ENCODE measurements at regions of chr6 and their contacts with region 1.

Region 1: GRCh38 chr6:10441004-10441662 is 26.3 kb upstream of the TFAP2A start:
- DNase-seq: peak; percentile 98
- H3K4me3 Mint-ChIP-seq: peak overlapping the region; percentile 40
- H3K27ac Mint-ChIP-seq: peak overlapping the region; percentile 98
- H3K4me1 Mint-ChIP-seq: peaks cover 15% of the 10 kb centered on the region
- H3K27me3 Mint-ChIP-seq: no peaks in the 10 kb centered on the region
- CTCF ChIP-seq: no peak

Region 2: DNA sequence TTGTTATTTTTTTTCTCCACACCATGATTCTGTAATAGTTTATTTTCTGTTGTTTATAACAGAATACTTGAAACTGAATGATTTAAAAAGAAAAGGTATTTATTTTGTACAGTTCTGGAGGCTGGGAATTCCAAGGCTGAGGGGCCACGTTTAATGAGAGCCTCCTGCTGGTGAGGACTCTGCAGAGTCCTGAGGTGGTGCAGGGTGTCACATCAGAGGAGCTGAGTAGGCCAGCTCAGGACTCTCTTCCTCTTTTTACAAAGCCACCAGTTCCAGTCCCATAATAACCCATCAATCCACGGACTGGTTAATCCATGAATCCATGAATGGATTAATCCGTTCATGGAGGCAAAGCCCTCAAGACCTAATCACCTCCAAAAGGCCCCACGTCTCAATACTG is 97.8 kb before region 1 on chr6:
- CTCF ChIA-PET with region 1: no interaction called
- POLR2A ChIA-PET with region 1: no interaction called
- intact Hi-C with region 1: no loop called
- DNase-seq: no peak
- H3K4me3 Mint-ChIP-seq: no peak overlapping the region
- H3K27ac Mint-ChIP-seq: no peak overlapping the region
- H3K4me1 Mint-ChIP-seq: peaks cover 11% of the 10 kb centered on the region
- H3K27me3 Mint-ChIP-seq: no peaks in the 10 kb centered on the region
- CTCF ChIP-seq: no peak

Region 3: GRCh38 chr6:10393544-10394225 is 47.4 kb before region 1 on chr6:
- CTCF ChIA-PET with region 1: no interaction called
- POLR2A ChIA-PET with region 1: no interaction called
- intact Hi-C with region 1: no loop called
- DNase-seq: no peak
- H3K4me3 Mint-ChIP-seq: no peak overlapping the region
- H3K27ac Mint-ChIP-seq: no peak overlapping the region
- H3K4me1 Mint-ChIP-seq: peaks cover 11% of the 10 kb centered on the region
- H3K27me3 Mint-ChIP-seq: no peaks in the 10 kb centered on the region
- CTCF ChIP-seq: no peak

Region 4: DNA sequence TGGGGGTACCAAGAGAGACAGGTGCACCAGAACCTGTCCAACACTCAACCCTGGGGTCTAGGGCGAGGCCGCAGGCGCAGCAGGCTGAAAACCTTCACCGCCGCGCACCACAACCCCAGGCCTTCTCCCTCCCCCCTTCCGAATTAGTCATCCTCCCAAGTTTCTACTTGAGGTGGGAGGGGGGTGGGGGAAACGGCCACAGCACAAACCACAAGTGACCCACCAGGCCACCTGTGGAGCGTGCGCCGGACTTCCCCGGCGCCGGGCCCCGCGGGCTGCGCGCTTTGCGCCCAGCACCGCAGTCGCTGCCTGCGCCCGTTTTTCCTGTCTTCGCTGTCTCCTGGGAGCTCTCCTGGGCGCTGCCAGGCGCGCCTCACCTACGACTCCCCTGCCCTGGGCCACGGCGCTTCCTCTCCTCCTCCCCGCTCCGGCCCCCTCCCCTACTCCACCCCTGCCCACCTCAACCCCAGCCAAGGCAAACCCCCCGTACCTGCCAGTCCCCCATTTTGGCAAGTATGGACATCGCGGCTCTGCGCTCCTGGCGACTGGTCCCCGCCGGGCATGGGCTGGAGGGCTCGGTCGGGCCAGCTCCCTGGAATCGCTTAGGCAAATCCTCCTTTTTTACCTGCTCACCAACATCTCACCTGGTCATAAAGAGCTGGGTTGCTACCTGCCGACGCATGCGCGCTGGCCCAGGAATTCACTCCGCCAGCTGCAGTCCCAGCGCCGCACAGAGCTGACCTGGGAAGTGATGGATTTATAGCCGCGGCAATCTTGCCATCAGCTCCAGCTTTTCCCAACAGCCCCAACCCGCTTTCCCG is 22.0 kb before region 1 on chr6:
- CTCF ChIA-PET with region 1: interaction called, 33 read pairs
- POLR2A ChIA-PET with region 1: interaction called, 763 read pairs
- intact Hi-C with region 1: no loop called
- DNase-seq: peak; percentile 96
- H3K4me3 Mint-ChIP-seq: peak overlapping the region; percentile 94
- H3K27ac Mint-ChIP-seq: peak overlapping the region; percentile 99
- H3K4me1 Mint-ChIP-seq: peaks cover 24% of the 10 kb centered on the region
- H3K27me3 Mint-ChIP-seq: no peaks in the 10 kb centered on the region
- CTCF ChIP-seq: no peak

Region 5: GRCh38 chr6:10451828-10452509 is 10.8 kb after region 1 on chr6:
- CTCF ChIA-PET with region 1: interaction called, 4 read pairs
- POLR2A ChIA-PET with region 1: interaction called, 57 read pairs
- intact Hi-C with region 1: no loop called
- DNase-seq: peak; percentile 99
- H3K4me3 Mint-ChIP-seq: peak overlapping the region; percentile 56
- H3K27ac Mint-ChIP-seq: peak overlapping the region; percentile 99
- H3K4me1 Mint-ChIP-seq: peaks cover 34% of the 10 kb centered on the region
- H3K27me3 Mint-ChIP-seq: no peaks in the 10 kb centered on the region
- CTCF ChIP-seq: no peak

Region 6: DNA sequence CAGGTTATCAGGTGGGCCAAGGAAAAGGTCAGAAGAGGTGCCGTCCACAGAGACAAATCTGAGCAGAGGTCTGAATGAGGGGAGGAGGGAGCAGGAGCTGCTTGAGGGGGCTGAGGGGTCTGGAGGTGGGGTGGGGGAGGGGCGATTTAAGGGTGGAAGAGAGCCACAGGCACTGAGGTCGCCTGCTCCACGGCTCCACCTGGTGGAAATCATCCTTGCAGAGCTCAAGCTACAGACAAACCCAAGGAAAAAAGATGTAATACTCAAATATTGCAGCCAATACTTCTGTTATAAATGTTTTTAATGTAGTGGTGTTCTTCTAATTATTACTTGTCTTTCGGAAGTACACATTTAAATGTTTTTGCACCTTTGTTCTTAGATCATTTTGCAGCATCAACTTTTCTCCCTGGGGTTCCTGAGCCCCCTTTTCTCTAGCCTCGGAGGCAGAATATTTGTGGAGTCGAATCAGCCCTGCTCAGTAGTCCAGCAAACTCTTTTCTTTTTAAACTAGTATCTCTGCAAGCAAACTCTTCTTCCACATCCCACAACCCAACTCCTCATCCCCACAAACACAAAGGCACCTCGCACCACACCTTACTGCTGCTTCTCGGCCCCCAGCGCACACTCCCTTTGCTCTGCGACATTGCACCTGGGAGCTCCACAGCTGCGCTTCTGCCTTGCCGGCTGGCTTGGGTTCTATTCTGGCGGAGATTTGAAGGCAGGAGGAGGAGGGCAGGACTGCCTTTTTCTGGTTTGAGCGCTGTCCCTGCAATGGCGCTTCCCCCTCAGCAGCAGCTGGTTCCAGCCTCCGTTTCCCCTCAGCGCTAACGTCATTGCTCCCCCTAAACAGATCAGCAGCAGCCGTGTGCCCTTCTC is 24.7 kb after region 1 on chr6:
- CTCF ChIA-PET with region 1: interaction called, 17 read pairs
- POLR2A ChIA-PET with region 1: interaction called, 20 read pairs
- intact Hi-C with region 1: loop called (anchors 1 kb)
- DNase-seq: peak; percentile 69
- H3K4me3 Mint-ChIP-seq: no peak overlapping the region
- H3K27ac Mint-ChIP-seq: no peak overlapping the region
- H3K4me1 Mint-ChIP-seq: peaks cover 13% of the 10 kb centered on the region
- H3K27me3 Mint-ChIP-seq: no peaks in the 10 kb centered on the region
- CTCF ChIP-seq: peak; percentile 73

Region 7: GRCh38 chr6:10793695-10794094 is 352.6 kb after region 1 on chr6:
- CTCF ChIA-PET with region 1: no interaction called
- POLR2A ChIA-PET with region 1: no interaction called
- intact Hi-C with region 1: no loop called
- DNase-seq: no peak
- H3K4me3 Mint-ChIP-seq: no peak overlapping the region
- H3K27ac Mint-ChIP-seq: no peak overlapping the region
- H3K4me1 Mint-ChIP-seq: no peaks in the 10 kb centered on the region
- H3K27me3 Mint-ChIP-seq: no peaks in the 10 kb centered on the region
- CTCF ChIP-seq: no peak

Measured in MCF 10A (cell line).